AG04449 (cell line): ENCODE measurements at regions of chr14 and their contacts with region 1.

Region 1: DNA sequence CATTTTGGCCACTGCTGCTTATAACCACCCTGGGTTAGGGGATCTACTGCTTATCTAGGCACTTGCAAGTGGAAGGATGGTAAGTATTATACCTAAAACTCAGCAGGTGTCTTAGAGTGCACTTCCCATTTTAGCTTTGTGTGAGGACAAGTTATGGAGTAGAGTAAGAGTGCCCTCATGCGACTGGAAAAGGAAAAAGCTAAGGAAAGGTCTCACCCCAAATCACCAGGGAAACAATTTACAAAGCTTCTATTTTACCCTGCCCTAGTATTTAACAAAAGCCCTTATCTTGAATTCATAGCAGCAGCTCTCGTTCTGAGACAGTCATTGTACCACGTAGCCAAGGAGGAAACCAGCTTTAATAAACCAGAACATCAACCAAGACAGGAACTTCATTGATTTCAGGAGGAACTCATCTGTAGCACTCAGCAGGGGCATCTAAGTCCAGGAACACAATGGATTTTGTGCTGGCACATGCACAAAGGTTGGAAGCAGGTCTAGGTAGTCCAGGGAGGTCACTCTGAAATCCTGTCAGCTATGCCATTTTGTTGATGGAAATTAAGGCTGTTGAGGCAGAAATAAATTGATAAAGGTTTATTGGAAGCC is 2.9 kb downstream of the RDH12 start:
- DNase-seq: no peak
- H3K4me3 ChIP-seq: no peak overlapping the region
- CTCF ChIP-seq: peak; percentile 64

Region 2: DNA sequence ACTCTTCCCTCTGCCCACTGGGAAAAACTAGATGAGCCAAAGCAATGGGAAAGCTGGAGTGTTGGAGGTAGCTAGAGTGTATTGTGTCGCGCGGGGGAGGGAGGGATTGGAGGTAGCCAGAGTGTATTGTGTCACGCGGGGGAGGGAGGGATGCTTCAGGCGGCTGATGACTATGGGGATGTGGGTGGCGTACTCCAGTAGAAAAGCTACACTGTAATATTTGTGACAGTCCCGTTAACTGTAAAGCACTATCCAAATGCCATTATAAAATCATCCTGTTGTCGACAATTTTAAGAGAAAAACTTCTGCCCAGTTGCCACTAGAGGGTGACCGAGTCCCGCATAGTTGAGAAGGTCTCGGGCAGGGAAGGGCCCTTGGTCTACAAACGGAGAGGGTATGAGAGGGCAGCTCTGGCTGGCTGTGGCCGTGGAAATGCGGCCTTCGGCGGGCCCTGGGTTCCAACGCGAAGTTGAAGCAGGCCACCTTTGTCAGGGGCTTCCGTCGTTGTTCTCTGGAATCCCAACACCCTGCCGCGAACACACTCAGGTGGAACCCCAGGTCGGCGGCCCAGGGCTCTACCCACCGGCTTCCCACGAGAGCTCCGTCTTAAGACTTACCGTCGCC is 277.5 kb before region 1 on chr14:
- CTCF ChIA-PET with region 1: interaction called, 100 read pairs
- POLR2A ChIA-PET with region 1: no interaction called
- DNase-seq: no peak
- H3K4me3 ChIP-seq: no peak overlapping the region
- CTCF ChIP-seq: peak; percentile 78

Region 3: DNA sequence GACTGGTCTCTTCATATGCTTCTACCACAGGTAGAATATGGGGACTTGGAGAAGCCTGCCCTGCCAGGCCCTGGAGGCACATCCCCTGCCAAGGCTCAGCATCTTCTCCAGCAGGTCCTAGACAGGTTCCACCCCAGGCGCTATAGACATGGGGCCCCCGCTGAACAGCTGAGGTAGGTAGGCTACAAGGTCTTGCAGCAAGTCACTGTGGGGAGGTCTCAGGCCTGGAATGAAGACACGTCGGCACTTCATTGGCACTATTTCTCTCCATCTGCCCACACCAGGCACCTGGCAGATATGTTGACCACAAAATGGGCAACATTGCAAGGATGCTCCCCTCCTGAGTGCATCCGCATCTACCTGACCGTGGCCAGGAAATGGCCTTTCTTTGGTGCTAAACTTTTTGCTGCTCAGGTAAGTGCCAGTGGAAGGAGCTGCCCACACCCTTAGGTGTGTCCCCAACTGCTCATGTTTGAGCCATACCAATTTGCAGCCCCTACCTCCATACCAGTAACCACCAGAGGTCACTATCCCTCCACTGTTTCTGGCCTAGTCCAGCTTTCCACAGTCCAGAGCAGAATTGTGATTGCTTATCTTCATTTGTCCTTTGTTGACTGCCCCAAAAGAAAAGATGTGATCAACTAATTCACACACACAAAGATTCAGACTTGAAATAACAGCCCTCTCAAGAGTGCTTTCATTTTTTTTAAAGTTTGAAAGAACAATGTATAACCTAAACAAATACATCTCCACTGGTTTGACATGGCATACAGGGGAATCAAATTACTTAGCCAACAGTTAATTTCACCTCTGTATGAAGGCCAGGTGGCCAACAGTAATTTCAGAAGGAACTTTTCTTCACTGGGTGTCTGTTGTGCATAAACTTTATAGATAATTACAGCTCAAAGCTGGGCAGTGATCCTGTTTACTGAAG is 120.6 kb before region 1 on chr14:
- CTCF ChIA-PET with region 1: interaction called, 417 read pairs
- POLR2A ChIA-PET with region 1: interaction called, 6 read pairs
- DNase-seq: no peak
- H3K4me3 ChIP-seq: no peak overlapping the region
- CTCF ChIP-seq: peak; percentile 72

Region 4: GRCh38 chr14:67619446-67620216 is 85.0 kb before region 1 on chr14 and contains the start of gene ARG2:
- CTCF ChIA-PET with region 1: interaction called, 138 read pairs
- POLR2A ChIA-PET with region 1: no interaction called
- DNase-seq: no peak
- H3K4me3 ChIP-seq: peak within 1 kb of the TSS; percentile 71
- CTCF ChIP-seq: peak; percentile 14

Region 5: GRCh38 chr14:67722293-67722692 is 17.7 kb after region 1 on chr14:
- CTCF ChIA-PET with region 1: interaction called, 114 read pairs
- POLR2A ChIA-PET with region 1: no interaction called
- DNase-seq: no peak
- H3K4me3 ChIP-seq: no peak overlapping the region
- CTCF ChIP-seq: no peak

Region 6: DNA sequence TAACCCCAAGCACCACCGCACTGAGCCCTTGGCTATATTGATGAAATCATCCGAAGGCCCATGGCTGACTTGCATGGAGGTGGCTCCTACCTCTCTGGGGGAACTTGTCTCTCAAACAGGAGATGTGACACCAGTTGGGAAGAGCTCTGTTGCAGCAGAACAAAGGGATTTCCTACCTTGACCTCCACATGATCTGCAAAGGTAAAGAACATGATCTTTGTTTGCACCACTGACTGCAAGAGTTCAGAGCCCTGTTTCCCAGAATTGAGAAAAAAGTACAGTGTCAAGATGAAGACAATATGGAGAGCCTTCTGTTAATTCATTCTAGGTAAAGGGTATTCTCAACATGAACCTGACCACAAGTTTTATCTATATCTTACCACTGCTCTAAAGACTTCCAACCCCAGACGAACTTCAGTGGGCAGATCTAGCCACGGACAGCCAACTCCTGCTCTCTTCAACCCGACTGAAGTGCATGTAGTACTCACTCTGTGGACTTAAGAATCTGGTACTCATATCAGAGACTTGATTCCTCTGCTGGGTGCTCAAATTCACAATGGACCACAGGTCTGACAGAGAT is 79.7 kb after region 1 on chr14:
- CTCF ChIA-PET with region 1: no interaction called
- POLR2A ChIA-PET with region 1: no interaction called
- DNase-seq: no peak
- H3K4me3 ChIP-seq: no peak overlapping the region
- CTCF ChIP-seq: no peak